Mammary epithelial cell (primary cell): ENCODE measurements at regions of chr6 and their contacts with region 1.

Region 1: GRCh38 chr6:109009236-109009961 is 85.2 kb downstream of the SESN1 start:
- DNase-seq: peak; percentile 89
- H3K4me3 ChIP-seq: peak overlapping the region; percentile 80 to 100 (median 97)
- H3K27ac ChIP-seq: peak overlapping the region; percentile 98
- H3K4me1 ChIP-seq: peaks cover 16% of the 10 kb centered on the region
- H3K27me3 ChIP-seq: no peaks in the 10 kb centered on the region
- CTCF ChIP-seq: no peak

Region 2: DNA sequence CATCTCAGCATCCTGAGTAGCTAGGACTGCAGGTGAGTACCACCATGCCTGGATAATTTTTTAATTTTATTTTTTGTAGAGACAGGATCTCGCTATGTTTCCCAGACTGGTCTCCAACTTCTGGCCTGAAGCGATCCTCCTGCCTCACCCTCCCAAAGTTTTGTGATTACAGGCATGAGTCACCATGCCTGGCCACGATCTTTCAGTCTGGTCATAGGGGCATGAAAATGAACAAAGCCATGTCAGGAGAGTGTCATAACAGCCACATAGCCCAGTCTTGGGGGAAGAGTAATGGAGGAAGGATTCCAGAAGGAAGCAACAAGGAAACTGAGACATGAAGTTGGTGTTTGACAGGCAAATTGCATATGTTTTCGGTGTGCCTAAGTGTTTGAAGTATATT is 731.6 kb before region 1 on chr6:
- CTCF ChIA-PET with region 1: no interaction called
- dilution Hi-C with region 1: no loop called
- in situ Hi-C with region 1: no loop called
- intact Hi-C with region 1: no loop called
- DNase-seq: peak; percentile 3
- H3K4me3 ChIP-seq: no peak overlapping the region
- H3K27ac ChIP-seq: no peak overlapping the region
- H3K4me1 ChIP-seq: no peaks in the 10 kb centered on the region
- H3K27me3 ChIP-seq: no peaks in the 10 kb centered on the region
- CTCF ChIP-seq: no peak

Region 3: DNA sequence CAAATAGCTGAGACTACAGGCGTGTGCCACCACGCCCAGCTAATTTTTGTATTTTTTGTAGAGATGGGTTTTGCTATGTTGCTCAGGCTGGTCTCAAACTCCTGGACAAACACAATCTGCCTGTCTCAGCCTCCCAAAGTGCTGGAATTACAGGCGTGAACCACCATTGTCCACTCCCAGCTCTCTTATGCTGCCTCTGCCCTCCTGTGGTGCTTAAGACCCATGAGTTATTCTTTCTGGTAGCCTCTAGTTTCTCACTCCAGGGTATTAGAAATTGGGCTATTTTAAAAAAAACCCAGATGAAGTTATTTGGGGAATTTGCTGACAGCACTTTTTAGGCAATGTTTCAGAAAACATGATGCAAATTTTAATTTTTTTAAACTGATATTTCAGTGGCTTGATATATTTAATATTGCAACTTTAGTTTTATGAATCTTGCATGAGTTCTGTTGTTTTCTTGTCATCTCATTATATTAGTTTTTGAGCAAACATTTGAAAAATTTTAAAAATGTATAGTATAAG is 562.7 kb before region 1 on chr6:
- CTCF ChIA-PET with region 1: no interaction called
- dilution Hi-C with region 1: no loop called
- in situ Hi-C with region 1: no loop called
- intact Hi-C with region 1: no loop called
- DNase-seq: no peak
- H3K4me3 ChIP-seq: no peak overlapping the region
- H3K27ac ChIP-seq: no peak overlapping the region
- H3K4me1 ChIP-seq: no peaks in the 10 kb centered on the region
- H3K27me3 ChIP-seq: no peaks in the 10 kb centered on the region
- CTCF ChIP-seq: no peak

Region 4: GRCh38 chr6:108947114-108947854 is 62.1 kb before region 1 on chr6:
- CTCF ChIA-PET with region 1: no interaction called
- dilution Hi-C with region 1: no loop called
- in situ Hi-C with region 1: no loop called
- intact Hi-C with region 1: loop called (anchors 5 kb)
- DNase-seq: peak; percentile 97
- H3K4me3 ChIP-seq: no peak overlapping the region
- H3K27ac ChIP-seq: peak overlapping the region; percentile 56
- H3K4me1 ChIP-seq: peaks cover 39% of the 10 kb centered on the region
- H3K27me3 ChIP-seq: no peaks in the 10 kb centered on the region
- CTCF ChIP-seq: no peak

Region 5: DNA sequence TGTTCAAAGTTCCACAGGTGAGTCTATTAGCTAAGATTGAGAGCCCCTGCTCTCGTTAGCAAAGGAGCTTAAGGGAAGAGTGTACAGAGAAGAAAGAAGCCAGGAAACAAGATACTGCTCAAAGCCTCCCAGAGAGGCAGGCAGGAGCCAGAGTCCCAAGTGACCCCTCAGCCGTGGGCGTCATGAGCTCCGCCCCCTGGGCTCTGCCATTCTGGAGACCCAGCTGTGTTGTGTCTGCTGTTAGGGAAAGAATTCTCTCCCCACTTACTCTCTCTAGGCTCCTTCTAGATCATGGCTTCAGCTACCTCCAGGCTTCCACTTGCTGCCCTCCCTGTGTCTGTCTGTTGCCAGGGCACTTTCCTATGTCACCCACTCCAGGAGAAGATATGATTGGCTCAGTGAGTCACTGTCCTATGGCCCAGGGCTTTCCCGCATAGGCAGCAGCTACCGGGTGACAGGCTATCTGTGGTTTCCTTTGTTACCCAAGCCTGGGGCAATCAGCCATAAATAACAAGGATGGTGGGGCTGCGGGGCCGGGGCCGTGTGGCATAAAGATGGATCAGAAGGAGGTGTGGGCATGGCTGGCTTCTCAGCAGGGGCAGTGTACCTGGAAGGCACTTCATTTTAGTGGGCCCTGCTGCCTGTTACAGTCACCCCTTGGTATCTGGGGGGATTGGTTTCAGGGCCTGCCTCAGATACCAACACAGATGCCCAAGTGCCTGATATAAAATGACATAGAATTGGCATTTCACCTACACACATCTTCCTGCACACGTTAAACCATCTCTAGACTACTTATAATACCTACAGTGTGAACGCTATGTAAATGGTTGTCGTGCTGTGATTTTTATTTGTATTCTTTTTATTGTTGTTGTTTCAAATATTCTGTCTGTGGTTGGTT is 42.3 kb before region 1 on chr6:
- CTCF ChIA-PET with region 1: no interaction called
- dilution Hi-C with region 1: no loop called
- in situ Hi-C with region 1: no loop called
- intact Hi-C with region 1: no loop called
- DNase-seq: peak; percentile 78
- H3K4me3 ChIP-seq: no peak overlapping the region
- H3K27ac ChIP-seq: no peak overlapping the region
- H3K4me1 ChIP-seq: peaks cover 14% of the 10 kb centered on the region
- H3K27me3 ChIP-seq: no peaks in the 10 kb centered on the region
- CTCF ChIP-seq: no peak

Region 6: DNA sequence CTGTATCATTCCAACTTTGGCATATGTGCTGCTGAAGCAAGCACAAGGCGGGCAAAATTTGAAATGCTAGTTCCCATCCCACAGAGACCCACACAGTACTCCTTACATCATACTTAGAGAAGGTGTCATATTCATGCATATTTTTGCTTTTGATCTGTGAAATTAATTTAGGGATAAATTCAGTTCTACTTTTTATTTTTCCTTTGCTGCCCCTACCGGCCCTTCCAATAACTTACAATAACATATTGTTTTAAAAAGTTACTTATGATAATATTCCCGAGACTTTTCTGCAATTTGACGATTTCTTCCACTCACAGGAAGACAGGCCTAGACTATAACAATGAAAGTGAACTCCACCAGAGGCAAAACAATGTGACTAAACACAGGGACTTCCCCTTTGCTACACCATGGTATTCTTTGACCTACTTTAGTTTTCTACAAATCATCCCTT is 50.2 kb after region 1 on chr6:
- CTCF ChIA-PET with region 1: no interaction called
- dilution Hi-C with region 1: no loop called
- in situ Hi-C with region 1: no loop called
- intact Hi-C with region 1: loop called (anchors 2 kb)
- DNase-seq: peak; percentile 48
- H3K4me3 ChIP-seq: no peak overlapping the region
- H3K27ac ChIP-seq: no peak overlapping the region
- H3K4me1 ChIP-seq: peaks cover 12% of the 10 kb centered on the region
- H3K27me3 ChIP-seq: no peaks in the 10 kb centered on the region
- CTCF ChIP-seq: peak; percentile 30 to 35

Region 7: DNA sequence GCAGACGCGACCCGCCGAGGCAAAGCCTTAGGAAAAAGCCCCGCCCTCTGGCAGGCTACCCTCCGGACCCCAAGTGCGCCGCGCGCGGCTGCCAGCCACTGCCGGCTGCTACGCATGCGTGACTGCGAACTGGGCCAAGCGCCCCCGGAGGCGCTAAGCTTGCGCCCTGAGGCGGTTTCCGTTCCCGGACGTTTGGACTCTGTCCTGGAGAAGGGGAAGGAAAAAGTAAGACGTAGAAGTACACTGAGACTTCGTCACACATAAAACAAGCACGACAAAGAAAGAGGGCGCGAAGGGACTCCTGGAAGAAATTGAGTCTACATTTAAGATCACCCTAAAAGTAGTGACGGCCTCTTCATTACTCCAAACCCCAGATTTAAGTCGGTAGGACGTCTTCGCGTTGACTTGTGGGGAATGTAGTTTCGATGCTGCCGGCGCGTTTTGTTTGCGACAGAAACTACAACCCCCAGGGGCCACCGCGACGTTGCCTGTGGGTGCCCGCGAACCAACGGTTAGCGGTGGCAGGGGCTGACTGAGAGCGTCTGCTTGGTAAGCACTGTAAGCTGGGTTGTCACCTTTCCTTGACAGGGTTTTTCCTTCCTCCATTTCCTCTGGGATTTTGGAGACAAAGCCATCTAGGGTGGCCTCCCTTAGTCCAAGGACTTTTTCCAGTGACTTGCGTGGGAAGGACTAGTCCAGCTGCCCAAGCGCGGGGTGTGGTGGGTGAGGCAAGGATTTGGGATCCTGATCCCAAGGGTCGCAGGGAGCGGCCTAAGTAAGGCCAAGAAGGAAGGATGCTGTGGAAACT is 85.8 kb after region 1 on chr6 and contains the start of gene CEP57L1:
- CTCF ChIA-PET with region 1: no interaction called
- dilution Hi-C with region 1: no loop called
- in situ Hi-C with region 1: no loop called
- intact Hi-C with region 1: no loop called
- DNase-seq: peak; percentile 96
- H3K4me3 ChIP-seq: peak within 1 kb of the TSS; percentile 90 to 94 (median 91)
- H3K27ac ChIP-seq: peak within 1 kb of the TSS; percentile 94
- H3K4me1 ChIP-seq: peaks cover 12% of the 10 kb centered on the region
- H3K27me3 ChIP-seq: no peaks in the 10 kb centered on the region
- CTCF ChIP-seq: peak in 1 of 2 donors; percentile 9
- total RNA-seq, gene CEP57L1: 17.7 to 23.6 TPM

Region 8: GRCh38 chr6:109382576-109383437 is 373.4 kb after region 1 on chr6:
- CTCF ChIA-PET with region 1: no interaction called
- dilution Hi-C with region 1: no loop called
- in situ Hi-C with region 1: no loop called
- intact Hi-C with region 1: loop called (anchors 10 kb)
- DNase-seq: peak; percentile 93
- H3K4me3 ChIP-seq: peak overlapping the region; percentile 70 to 100 (median 95)
- H3K27ac ChIP-seq: peak overlapping the region; percentile 98
- H3K4me1 ChIP-seq: peaks cover 29% of the 10 kb centered on the region
- H3K27me3 ChIP-seq: no peaks in the 10 kb centered on the region
- CTCF ChIP-seq: peak; percentile 42 to 61